HepG2 (cell line): ENCODE measurements at regions of chr6 and their contacts with region 1.

Region 1: GRCh38 chr6:108492131-108492766 is 68.5 kb upstream of the FOXO3 start:
- DNase-seq: peak; percentile 25
- ATAC-seq: peak; percentile 36; the same call in 2 of the 3 replicates
- H3K4me3 ChIP-seq: no peak overlapping the region
- H3K27ac ChIP-seq: no peak overlapping the region
- H3K4me1 ChIP-seq: no peaks in the 10 kb centered on the region
- H3K27me3 ChIP-seq: no peaks in the 10 kb centered on the region; a peak in 1 of 5 replicates
- CTCF ChIP-seq: peak; percentile 66
- EP300 ChIP-seq: no peak
- POLR2A ChIP-seq: no peak
- RAD21 ChIP-seq: no peak

Region 2: DNA sequence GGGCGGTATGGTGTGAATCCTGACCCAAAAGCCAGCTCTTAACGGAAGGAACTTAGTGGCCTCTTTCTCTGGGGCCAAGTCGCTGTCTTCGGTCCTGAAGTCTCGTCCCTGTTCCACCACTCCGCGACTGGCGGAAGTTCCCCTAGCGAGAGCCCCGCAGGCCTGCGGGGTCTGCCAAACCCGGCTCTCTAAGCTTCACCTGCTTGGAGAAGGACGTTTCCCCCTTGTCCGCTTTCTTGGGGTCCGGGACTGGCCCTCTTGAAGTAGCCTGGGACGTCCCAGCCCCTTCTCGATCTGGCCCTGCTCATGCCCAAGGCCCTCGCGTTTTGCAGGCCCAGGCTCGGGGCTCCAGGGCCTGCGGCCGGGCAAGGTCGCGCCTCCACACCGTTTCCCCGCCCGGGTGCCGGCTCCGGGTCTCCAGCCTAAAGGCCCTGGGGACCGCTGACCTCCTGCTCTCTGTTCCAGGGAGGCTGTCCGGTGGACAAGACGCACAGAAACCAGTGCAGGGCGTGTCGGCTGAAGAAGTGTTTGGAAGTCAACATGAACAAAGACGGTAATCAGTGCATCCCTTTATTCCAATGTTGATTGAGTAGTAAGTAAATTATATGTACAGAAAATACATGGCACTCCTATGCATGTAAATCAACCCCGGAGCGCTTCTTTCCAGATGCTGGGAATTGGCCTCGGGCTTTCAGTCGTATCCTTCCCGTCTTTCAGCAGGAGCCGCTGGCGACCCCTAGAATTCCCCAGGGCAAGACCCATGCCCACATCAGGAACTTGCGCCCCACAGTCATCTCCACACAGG is 317.7 kb before region 1 on chr6:
- CTCF ChIA-PET with region 1: interaction called, 3 read pairs
- POLR2A ChIA-PET with region 1: no interaction called
- in situ Hi-C with region 1: no loop called
- intact Hi-C with region 1: loop called (anchors 1 kb)
- DNase-seq: no peak
- ATAC-seq: no peak
- H3K4me3 ChIP-seq: no peak overlapping the region
- H3K27ac ChIP-seq: no peak overlapping the region
- H3K4me1 ChIP-seq: peaks cover 19% of the 10 kb centered on the region
- H3K27me3 ChIP-seq: peaks cover 3 to 60% of the 10 kb centered on the region in 2 experiments; a peak in 3 of 5 replicates
- CTCF ChIP-seq: no peak
- EP300 ChIP-seq: no peak
- POLR2A ChIP-seq: no peak
- RAD21 ChIP-seq: no peak

Region 3: DNA sequence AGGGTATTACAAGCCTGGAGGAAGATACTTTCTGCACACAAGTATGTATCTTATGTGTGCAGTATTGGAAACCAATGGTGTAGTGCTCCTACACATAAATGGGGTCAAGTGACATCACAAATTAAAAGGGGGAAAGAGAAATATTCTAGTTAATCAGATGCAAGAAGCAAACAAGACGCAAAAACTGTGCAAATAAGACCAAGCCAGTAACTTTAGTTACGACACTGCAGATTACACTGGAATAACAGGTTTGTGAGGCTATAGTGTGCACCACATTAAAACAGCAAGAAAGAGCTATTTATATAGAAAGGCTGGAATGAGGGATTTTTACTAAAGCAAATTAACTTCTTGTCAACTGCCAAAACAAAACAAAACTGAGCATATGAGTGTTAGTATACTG is 280.6 kb before region 1 on chr6:
- CTCF ChIA-PET with region 1: no interaction called
- POLR2A ChIA-PET with region 1: no interaction called
- in situ Hi-C with region 1: no loop called
- intact Hi-C with region 1: no loop called
- DNase-seq: no peak
- ATAC-seq: no peak
- H3K4me3 ChIP-seq: no peak overlapping the region
- H3K27ac ChIP-seq: no peak overlapping the region
- H3K4me1 ChIP-seq: no peaks in the 10 kb centered on the region
- H3K27me3 ChIP-seq: no peaks in the 10 kb centered on the region
- CTCF ChIP-seq: no peak
- EP300 ChIP-seq: no peak
- POLR2A ChIP-seq: no peak
- RAD21 ChIP-seq: no peak

Region 4: DNA sequence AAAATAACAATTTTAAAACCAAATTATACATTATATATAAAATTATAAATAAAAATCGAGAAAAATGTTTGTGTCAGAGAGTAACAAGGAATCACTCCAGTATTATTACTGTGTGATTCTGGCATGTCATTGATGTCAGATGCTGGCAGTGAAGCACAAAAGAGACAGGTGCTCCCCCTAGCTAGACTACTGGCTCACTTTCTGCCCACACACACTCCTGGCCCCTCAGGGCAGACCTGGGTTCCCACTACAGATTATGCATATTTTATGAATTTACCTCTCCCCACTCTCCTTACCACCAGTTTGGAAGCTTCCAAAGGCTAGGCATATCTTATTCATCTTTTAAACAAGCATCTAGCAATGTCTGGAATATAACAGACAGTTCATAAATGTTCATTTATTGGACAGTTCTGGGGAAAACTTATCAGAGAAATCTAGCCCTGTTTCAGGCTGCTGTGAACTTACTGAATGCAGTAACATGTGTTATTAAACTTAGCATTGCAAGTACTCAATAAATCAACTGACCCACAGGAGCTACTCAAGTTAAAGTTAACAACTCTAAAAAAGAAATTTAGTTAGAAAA is 244.2 kb before region 1 on chr6:
- CTCF ChIA-PET with region 1: no interaction called
- POLR2A ChIA-PET with region 1: no interaction called
- in situ Hi-C with region 1: no loop called
- intact Hi-C with region 1: loop called (anchors 1 kb)
- DNase-seq: no peak
- ATAC-seq: no peak
- H3K4me3 ChIP-seq: no peak overlapping the region
- H3K27ac ChIP-seq: no peak overlapping the region
- H3K4me1 ChIP-seq: peaks cover 7% of the 10 kb centered on the region; the same call in 1 of the 2 replicates
- H3K27me3 ChIP-seq: no peaks in the 10 kb centered on the region
- CTCF ChIP-seq: peak; percentile 29
- EP300 ChIP-seq: no peak
- POLR2A ChIP-seq: no peak
- RAD21 ChIP-seq: no peak